CD4-positive, alpha-beta T cell (primary cell): ENCODE measurements at regions of chr20 and their contacts with region 1.

Region 1: DNA sequence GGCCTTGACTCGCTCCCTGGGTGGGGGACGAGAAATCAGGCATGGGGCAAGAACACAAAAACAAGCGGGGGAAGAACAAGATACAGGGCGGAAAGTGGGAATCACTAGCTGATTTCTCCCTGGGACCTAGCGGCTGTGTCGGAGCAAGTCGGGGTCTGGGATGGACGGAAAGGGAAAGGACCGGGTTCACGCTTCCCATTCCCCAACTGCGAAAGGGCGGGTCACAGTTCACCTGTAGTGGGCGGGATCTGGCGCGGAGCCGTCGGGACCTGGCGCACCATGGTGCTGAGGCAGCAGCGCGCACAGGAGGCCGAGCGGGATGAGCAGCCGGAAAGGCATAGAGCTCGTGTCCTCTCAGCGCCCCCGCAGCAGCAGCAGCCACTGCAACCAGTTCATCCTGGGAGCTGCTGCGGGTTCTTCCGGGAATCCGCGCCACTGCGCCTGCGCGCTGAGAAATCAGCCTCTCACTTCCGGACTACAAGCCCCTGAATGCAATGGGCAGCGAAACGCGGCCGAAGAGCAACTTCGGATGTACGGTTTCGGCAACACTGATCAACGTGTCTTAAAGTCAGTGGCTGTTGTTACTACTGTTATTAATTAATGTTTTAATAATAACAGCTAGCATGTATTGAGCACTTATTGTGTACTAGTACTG is at the start of gene EDEM2:
- DNase-seq: peak; percentile 83 to 97 (median 92)
- ATAC-seq: peak; percentile 85
- H3K4me3 ChIP-seq: peak within 1 kb of the TSS; percentile 77
- H3K4me3 Mint-ChIP-seq: peak within 1 kb of the TSS; percentile 96
- H3K27ac ChIP-seq: peak within 1 kb of the TSS; percentile 37 to 55
- H3K27ac Mint-ChIP-seq: peak within 1 kb of the TSS; percentile 93
- H3K4me1 ChIP-seq: peaks cover 32% of the 10 kb centered on the region
- H3K4me1 Mint-ChIP-seq: peaks cover 44% of the 10 kb centered on the region
- H3K27me3 ChIP-seq: no peaks in the 10 kb centered on the region
- H3K27me3 Mint-ChIP-seq: no peaks in the 10 kb centered on the region
- CTCF ChIP-seq: no peak
- total RNA-seq, gene EDEM2: 12.2 to 12.6 TPM

Region 2: GRCh38 chr20:34876162-34877001 is 270.7 kb before region 1 on chr20 and contains the start of gene ACSS2:
- CTCF ChIA-PET with region 1: no interaction called
- POLR2A ChIA-PET with region 1: interaction called, 4 read pairs
- intact Hi-C with region 1: loop called in 1 of 2 experiments (anchors 5 kb)
- DNase-seq: peak; percentile 91 to 99 (median 94)
- ATAC-seq: peak; percentile 81
- H3K4me3 ChIP-seq: peak within 1 kb of the TSS; percentile 70
- H3K4me3 Mint-ChIP-seq: peak within 1 kb of the TSS; percentile 90
- H3K27ac ChIP-seq: peak within 1 kb of the TSS; percentile 11 to 42
- H3K27ac Mint-ChIP-seq: peak within 1 kb of the TSS; percentile 81
- H3K4me1 ChIP-seq: peaks cover 51% of the 10 kb centered on the region
- H3K4me1 Mint-ChIP-seq: peaks cover 66% of the 10 kb centered on the region
- H3K27me3 ChIP-seq: no peaks in the 10 kb centered on the region
- H3K27me3 Mint-ChIP-seq: no peaks in the 10 kb centered on the region
- CTCF ChIP-seq: no peak
- total RNA-seq, gene ACSS2: 15.6 to 18.8 TPM

Region 3: GRCh38 chr20:35166242-35166830 is 19.3 kb after region 1 on chr20:
- CTCF ChIA-PET with region 1: no interaction called
- POLR2A ChIA-PET with region 1: interaction called, 16 read pairs
- intact Hi-C with region 1: no loop called
- DNase-seq: no peak
- ATAC-seq: no peak
- H3K4me3 ChIP-seq: no peak overlapping the region
- H3K4me3 Mint-ChIP-seq: no peak overlapping the region
- H3K27ac ChIP-seq: no peak overlapping the region
- H3K27ac Mint-ChIP-seq: no peak overlapping the region
- H3K4me1 ChIP-seq: peaks cover 7% of the 10 kb centered on the region
- H3K4me1 Mint-ChIP-seq: peaks cover 11% of the 10 kb centered on the region
- H3K27me3 ChIP-seq: no peaks in the 10 kb centered on the region
- H3K27me3 Mint-ChIP-seq: no peaks in the 10 kb centered on the region
- CTCF ChIP-seq: no peak

Region 4: DNA sequence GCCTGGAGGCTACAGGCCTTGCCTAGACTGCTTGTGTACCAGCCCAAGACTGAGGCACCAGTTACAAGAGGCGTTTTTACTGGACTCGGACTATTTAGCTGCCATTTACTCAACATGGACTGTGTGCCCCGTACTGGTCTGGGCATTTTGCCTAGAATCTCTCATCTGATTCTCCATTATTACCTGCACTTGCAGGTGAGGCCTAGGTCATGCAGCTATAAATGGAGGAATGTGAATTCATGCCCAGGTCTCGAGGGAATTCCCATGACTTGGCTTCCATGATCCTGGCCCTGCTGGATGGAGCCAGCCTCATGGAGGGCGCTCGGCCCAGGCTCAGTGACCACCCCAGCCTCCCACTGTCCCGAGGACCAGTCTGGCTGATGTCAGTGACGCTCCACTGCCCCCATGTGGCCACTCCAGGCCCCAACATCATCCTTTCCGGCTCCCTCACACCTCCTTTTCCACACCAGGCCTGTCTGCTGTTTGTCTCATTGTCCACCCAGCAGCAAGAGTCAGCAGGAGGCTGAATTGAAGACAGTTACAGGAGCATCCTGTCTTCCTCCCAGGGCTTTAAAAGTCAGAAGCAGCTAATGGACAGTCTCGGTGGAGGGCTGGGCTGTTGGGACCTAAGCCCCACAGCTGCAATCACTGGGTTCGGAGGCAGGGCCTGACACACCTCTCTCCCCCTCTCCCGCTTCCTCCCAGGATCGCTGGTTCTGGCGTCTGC is 122.2 kb after region 1 on chr20:
- CTCF ChIA-PET with region 1: interaction called, 4 read pairs
- POLR2A ChIA-PET with region 1: no interaction called
- intact Hi-C with region 1: loop called in 1 of 2 experiments (anchors 1 kb)
- DNase-seq: peak in 9 of 14 experiments; percentile 8 to 67 (median 33)
- ATAC-seq: peak; percentile 68
- H3K4me3 ChIP-seq: no peak overlapping the region
- H3K4me3 Mint-ChIP-seq: no peak overlapping the region
- H3K27ac ChIP-seq: no peak overlapping the region
- H3K27ac Mint-ChIP-seq: no peak overlapping the region
- H3K4me1 ChIP-seq: peaks cover 6% of the 10 kb centered on the region
- H3K4me1 Mint-ChIP-seq: peaks cover 14% of the 10 kb centered on the region
- H3K27me3 ChIP-seq: no peaks in the 10 kb centered on the region
- H3K27me3 Mint-ChIP-seq: no peaks in the 10 kb centered on the region
- CTCF ChIP-seq: peak; percentile 62

Region 5: DNA sequence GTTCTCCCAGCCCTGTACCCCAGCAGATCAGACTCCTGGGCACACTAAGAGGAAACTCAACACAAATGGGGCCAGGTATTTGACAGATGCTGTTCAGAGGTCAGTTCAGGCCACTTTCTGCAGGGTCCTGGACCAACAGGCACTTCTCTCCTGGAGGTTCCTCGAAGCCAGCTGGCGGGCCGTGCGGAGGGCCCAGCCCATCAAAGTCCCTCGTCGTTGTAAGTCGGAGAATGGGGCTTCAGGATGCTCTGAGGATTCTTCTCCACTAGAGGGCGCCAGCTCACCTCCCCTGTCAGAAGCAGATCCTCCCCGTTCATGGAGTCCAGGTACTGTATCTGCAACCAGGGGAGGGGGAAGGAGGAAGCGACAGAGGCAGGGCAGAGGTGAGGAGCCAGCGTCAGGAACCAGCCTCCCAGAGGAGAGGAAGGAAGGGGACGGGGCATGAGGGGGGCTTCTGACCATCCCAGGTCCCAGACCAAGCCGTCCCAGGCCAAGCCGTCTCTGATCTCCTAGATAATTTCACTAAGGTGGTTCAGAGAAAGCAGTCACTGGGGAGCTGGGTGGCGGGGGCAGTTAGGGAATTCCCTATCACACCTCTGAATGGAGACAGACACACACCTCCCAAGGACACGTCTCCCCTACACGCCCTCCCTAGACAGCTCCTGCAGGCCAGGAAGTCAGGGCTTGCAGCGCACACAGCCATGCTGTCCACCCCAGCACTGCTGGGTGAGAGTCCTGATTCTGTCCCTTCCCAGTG is 156.9 kb after region 1 on chr20:
- CTCF ChIA-PET with region 1: interaction called, 5 read pairs
- POLR2A ChIA-PET with region 1: interaction called, 3 read pairs
- intact Hi-C with region 1: loop called in 1 of 2 experiments (anchors 10 kb)
- DNase-seq: peak; percentile 66 to 93 (median 78)
- ATAC-seq: peak; percentile 98
- H3K4me3 ChIP-seq: no peak overlapping the region
- H3K4me3 Mint-ChIP-seq: no peak overlapping the region
- H3K27ac ChIP-seq: no peak overlapping the region
- H3K27ac Mint-ChIP-seq: no peak overlapping the region
- H3K4me1 ChIP-seq: peaks cover 17% of the 10 kb centered on the region
- H3K4me1 Mint-ChIP-seq: peaks cover 8% of the 10 kb centered on the region
- H3K27me3 ChIP-seq: no peaks in the 10 kb centered on the region
- H3K27me3 Mint-ChIP-seq: no peaks in the 10 kb centered on the region
- CTCF ChIP-seq: peak; percentile 94